Activated CD8-positive, alpha-beta T cell treated with anti-CD3 and anti-CD28 coated beads for 36 hours (primary cell): ENCODE measurements at regions of chr5 and their contacts with region 1.

Region 1: DNA sequence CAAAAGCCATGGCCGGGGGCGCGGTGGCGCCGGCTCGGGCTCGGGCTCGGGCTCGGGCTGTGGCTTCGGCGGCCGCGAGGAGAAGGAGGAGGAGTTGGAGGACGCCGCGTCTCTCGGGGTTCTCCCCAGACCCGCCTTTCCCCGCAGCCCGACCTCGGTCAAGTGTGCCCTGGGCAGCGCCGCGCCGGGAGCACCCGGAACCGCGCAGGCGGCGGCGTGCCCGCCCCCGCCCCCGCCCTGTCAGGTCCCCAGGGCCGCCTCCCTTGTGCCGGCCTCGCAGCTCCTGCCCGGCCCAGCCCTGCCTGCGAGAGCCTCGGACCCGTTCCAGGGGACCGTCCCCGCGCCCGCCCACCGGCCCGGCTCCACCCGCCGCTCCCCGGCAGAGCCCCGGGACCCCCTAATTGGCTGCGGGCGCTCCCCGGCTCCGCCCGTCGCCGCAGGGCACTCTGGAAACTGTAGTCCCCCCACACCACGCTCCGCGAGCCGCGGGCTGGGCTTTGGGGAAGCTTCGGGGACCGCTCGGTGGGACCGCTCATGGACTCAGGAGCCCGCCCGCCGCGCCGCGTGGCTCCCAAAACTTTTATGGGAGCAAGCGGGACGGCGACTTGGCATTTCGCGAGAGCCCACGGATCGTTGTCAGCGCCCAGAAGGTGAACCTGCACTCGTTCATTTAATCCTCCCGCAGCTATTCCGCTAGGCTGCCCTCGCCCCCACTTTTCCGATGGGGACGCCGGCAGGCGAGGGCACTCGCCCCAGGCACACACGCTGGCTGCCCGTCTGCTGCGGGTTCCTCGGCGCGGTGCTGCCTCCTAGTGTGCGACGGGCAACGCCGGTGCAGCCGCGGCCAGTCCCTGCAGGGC is at the start of gene STK10:
- DNase-seq: peak; percentile 93
- ATAC-seq: peak; percentile 76
- H3K4me3 Mint-ChIP-seq: peak within 1 kb of the TSS; percentile 92
- H3K27ac Mint-ChIP-seq: peak within 1 kb of the TSS; percentile 96
- H3K4me1 Mint-ChIP-seq: peaks cover 18% of the 10 kb centered on the region
- H3K27me3 Mint-ChIP-seq: no peaks in the 10 kb centered on the region
- CTCF ChIP-seq: peak; percentile 90
- total RNA-seq, gene STK10: 142 to 143 TPM

Region 2: GRCh38 chr5:172006321-172007174 is 181.7 kb before region 1 on chr5 and contains the start of gene FBXW11:
- CTCF ChIA-PET with region 1: interaction called, 16 read pairs
- POLR2A ChIA-PET with region 1: interaction called, 24 read pairs
- intact Hi-C with region 1: no loop called
- DNase-seq: peak; percentile 97
- ATAC-seq: peak; percentile 84
- H3K4me3 Mint-ChIP-seq: peak within 1 kb of the TSS; percentile 98
- H3K27ac Mint-ChIP-seq: peak within 1 kb of the TSS; percentile 97
- H3K4me1 Mint-ChIP-seq: peaks cover 53% of the 10 kb centered on the region
- H3K27me3 Mint-ChIP-seq: no peaks in the 10 kb centered on the region
- CTCF ChIP-seq: no peak
- total RNA-seq, gene FBXW11: 49.3 to 52.6 TPM

Region 3: DNA sequence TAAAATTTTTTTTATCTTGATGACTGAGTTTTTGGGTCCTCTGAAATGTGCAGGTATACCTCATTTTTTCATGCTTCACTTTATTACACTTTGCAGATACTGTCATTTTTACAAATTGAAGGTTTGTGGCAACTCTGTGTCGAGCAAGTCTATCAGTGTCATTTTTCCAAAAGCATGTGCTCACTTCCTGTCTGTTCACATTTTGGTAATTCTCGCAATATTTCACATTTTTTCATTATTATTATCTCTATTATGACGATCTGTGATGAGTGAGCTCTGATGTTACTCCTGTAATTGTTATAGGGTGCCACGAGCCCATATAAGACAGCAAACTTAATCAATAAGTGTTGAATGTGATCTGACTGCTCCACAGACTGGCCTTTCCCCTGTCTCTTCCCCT is 108.4 kb before region 1 on chr5:
- CTCF ChIA-PET with region 1: interaction called, 13 read pairs
- POLR2A ChIA-PET with region 1: interaction called, 3 read pairs
- intact Hi-C with region 1: no loop called
- DNase-seq: no peak
- ATAC-seq: no peak
- H3K4me3 Mint-ChIP-seq: no peak overlapping the region
- H3K27ac Mint-ChIP-seq: peak overlapping the region; percentile 66
- H3K4me1 Mint-ChIP-seq: peaks cover 17% of the 10 kb centered on the region
- H3K27me3 Mint-ChIP-seq: no peaks in the 10 kb centered on the region
- CTCF ChIP-seq: no peak

Region 4: DNA sequence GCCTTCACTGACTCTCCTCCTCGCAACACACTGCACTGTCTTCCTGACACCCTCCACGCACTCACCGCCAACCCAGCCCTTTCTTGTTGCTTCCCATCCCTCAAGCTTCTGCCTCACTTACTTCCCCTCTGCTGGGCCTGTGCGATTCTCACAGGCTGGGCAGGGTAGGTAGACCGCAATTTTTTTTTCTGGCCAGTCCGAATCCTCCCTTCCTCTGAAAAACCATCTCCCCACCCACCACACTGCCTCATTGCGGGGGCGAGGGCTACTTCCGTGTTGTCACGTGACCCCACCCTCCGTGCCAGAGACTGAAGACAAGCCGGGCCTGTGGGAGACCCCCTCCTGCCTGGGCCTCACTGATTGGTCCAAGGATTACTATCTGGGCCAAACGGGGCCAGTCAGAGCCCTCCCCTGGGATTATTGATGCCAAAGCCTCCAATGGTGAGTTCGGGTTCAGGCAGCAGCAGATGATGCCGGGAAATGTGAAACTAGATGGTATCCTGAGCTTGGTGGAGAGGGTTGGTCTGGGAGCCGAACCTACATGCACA is 73.3 kb before region 1 on chr5:
- CTCF ChIA-PET with region 1: interaction called, 32 read pairs
- POLR2A ChIA-PET with region 1: interaction called, 25 read pairs
- intact Hi-C with region 1: no loop called
- DNase-seq: peak; percentile 98
- ATAC-seq: peak; percentile 71
- H3K4me3 Mint-ChIP-seq: peak overlapping the region; percentile 80
- H3K27ac Mint-ChIP-seq: peak overlapping the region; percentile 99
- H3K4me1 Mint-ChIP-seq: peaks cover 74% of the 10 kb centered on the region
- H3K27me3 Mint-ChIP-seq: no peaks in the 10 kb centered on the region
- CTCF ChIP-seq: no peak

Region 5: DNA sequence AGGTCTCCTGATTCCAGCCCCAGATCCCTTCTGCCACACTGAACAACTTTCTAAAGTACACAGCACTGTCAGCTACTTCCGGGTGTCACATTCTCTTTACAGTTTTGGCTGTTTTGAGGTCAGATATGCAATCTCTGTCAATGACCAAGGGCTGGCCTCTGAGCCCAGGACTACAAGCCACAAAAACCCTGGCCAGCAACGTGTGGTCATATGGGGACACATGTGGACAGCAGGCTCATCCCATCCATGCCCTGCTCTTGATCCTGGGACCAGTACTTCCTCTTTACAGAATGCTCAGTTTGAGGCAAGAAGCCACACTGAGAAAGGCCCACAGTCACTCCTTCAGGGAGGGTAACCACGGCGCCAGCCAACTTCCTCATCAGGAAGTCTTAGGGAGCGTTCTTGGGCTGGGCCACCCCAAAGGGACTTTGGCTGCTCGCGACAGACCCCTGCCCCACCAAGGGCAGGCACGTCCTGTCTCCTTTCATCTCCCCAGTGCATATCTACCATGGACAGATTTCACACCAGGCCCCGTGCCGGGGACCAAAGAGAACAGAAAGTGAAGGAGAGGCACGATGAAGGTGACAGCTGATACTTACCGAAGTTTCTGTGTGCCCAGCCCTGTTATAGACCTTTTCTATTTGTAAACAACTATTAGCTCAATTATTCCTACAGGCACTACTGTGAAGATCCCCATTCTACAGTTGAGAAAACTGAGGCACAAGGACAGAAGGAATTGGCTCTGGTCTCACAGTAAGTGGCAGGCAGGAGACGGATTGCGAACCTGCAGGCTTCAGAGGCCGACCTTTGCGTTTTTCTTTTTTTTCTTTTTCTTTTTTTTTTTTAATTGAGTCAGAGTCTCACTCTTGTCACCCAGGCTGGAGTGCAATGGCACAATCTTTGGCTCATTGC is 37.5 kb before region 1 on chr5:
- CTCF ChIA-PET with region 1: interaction called, 12 read pairs
- POLR2A ChIA-PET with region 1: interaction called, 3 read pairs
- intact Hi-C with region 1: no loop called
- DNase-seq: peak; percentile 56
- ATAC-seq: peak; percentile 70
- H3K4me3 Mint-ChIP-seq: peak overlapping the region; percentile 63
- H3K27ac Mint-ChIP-seq: peak overlapping the region; percentile 91
- H3K4me1 Mint-ChIP-seq: peaks cover 68% of the 10 kb centered on the region
- H3K27me3 Mint-ChIP-seq: no peaks in the 10 kb centered on the region
- CTCF ChIP-seq: no peak

Region 6: GRCh38 chr5:172293054-172293744 is 104.9 kb after region 1 on chr5:
- CTCF ChIA-PET with region 1: interaction called, 22 read pairs
- POLR2A ChIA-PET with region 1: interaction called, 3 read pairs
- intact Hi-C with region 1: no loop called
- DNase-seq: peak; percentile 76
- ATAC-seq: peak; percentile 100
- H3K4me3 Mint-ChIP-seq: no peak overlapping the region
- H3K27ac Mint-ChIP-seq: no peak overlapping the region
- H3K4me1 Mint-ChIP-seq: no peaks in the 10 kb centered on the region
- H3K27me3 Mint-ChIP-seq: peaks cover 6% of the 10 kb centered on the region
- CTCF ChIP-seq: peak; percentile 84